A549 (cell line): ENCODE measurements at regions of chr1 and their contacts with region 1.

Region 1: DNA sequence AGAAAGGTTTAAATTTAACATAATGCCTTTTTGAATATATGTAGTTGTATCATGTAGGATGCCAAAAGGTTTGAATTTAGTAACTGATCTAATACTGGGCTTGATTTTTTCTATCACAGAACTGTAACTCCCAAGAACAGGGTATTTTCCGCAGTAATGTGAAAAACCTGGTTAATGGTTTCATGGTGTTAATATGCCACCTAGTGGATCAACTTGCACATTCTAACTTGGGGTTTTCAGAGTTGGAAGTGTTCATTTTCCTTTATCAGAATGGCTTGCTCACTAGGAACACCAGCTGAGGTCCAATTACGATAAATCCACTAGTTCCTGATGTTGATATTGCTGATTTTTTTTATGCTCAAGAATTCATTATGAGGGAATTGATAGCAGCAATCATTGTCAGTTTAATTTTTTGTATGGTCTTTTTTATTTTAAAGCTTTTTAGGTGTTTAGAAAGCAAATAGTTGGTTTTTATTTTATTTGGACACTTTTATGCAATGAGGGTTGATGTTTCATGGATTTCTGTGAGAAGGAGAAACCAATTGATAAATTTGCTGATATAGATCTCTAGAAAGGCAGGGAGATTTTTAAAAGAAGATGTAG is 157.2 kb downstream of the PLA2G4A start:
- DNase-seq: peak; percentile 33 to 62
- ATAC-seq: peak; percentile 85 to 91
- H3K4me3 ChIP-seq: no peak overlapping the region
- H3K27ac ChIP-seq: peak overlapping the region; percentile 39 to 63; a peak in 2 of 6 replicates
- H3K4me1 ChIP-seq: peaks cover 6% of the 10 kb centered on the region; the same call in 1 of the 3 replicates
- CTCF ChIP-seq: peak; percentile 93
- EP300 ChIP-seq: no peak
- POLR2A ChIP-seq: no peak
- RAD21 ChIP-seq: peak; percentile 96 to 97

Region 2: GRCh38 chr1:186375088-186375953 is 610.7 kb before region 1 on chr1 and contains the starts of genes ODR4 and TPR:
- CTCF ChIA-PET with region 1: interaction called, 11 read pairs
- POLR2A ChIA-PET with region 1: interaction called, 6 read pairs
- DNase-seq: peak; percentile 97 to 100
- ATAC-seq: peak; percentile 92 to 96
- H3K4me3 ChIP-seq: peak within 1 kb of the TSS; percentile 92
- H3K27ac ChIP-seq: peak within 1 kb of the TSS; percentile 82 to 93
- H3K4me1 ChIP-seq: peaks cover 26% of the 10 kb centered on the region; the same call in 2 of the 3 replicates
- CTCF ChIP-seq: peak; percentile 98
- EP300 ChIP-seq: no peak
- POLR2A ChIP-seq: peak; percentile 87
- RAD21 ChIP-seq: peak; percentile 49 to 74
- polyA plus RNA-seq, gene ODR4: 25.2 and 34.9 TPM in 2 replicates
- polyA plus RNA-seq, gene TPR: 93.2 and 138 TPM in 2 replicates

Region 3: GRCh38 chr1:186482661-186483255 is 503.2 kb before region 1 on chr1:
- CTCF ChIA-PET with region 1: interaction called, 10 read pairs
- POLR2A ChIA-PET with region 1: no interaction called
- DNase-seq: peak; percentile 41 to 77
- ATAC-seq: peak; percentile 83 to 90
- H3K4me3 ChIP-seq: no peak overlapping the region
- H3K27ac ChIP-seq: peak overlapping the region; percentile 17 to 38; a peak in 5 of 6 replicates
- H3K4me1 ChIP-seq: peaks cover 23% of the 10 kb centered on the region; the same call in 2 of the 3 replicates
- CTCF ChIP-seq: peak; percentile 98
- EP300 ChIP-seq: no peak
- POLR2A ChIP-seq: no peak
- RAD21 ChIP-seq: peak; percentile 99 to 100

Region 4: GRCh38 chr1:186605762-186606350 is 380.1 kb before region 1 on chr1:
- CTCF ChIA-PET with region 1: interaction called, 28 read pairs
- POLR2A ChIA-PET with region 1: no interaction called
- DNase-seq: peak in 1 of 2 experiments; percentile 73
- ATAC-seq: peak; percentile 81 to 94
- H3K4me3 ChIP-seq: no peak overlapping the region
- H3K27ac ChIP-seq: peak overlapping the region; percentile 15 to 71; a peak in 3 of 6 replicates
- H3K4me1 ChIP-seq: no peaks in the 10 kb centered on the region
- CTCF ChIP-seq: peak; percentile 75
- EP300 ChIP-seq: no peak
- POLR2A ChIP-seq: no peak
- RAD21 ChIP-seq: peak; percentile 93 to 96

Region 5: GRCh38 chr1:186806477-186806876 is 179.5 kb before region 1 on chr1:
- CTCF ChIA-PET with region 1: interaction called, 11 read pairs
- POLR2A ChIA-PET with region 1: no interaction called
- DNase-seq: peak; percentile 23 to 77
- ATAC-seq: peak; percentile 81 to 91
- H3K4me3 ChIP-seq: no peak overlapping the region
- H3K27ac ChIP-seq: peak overlapping the region in 1 of 2 experiments; percentile 35; a peak in 1 of 6 replicates
- H3K4me1 ChIP-seq: peaks cover 11% of the 10 kb centered on the region
- CTCF ChIP-seq: peak; percentile 57
- EP300 ChIP-seq: no peak
- POLR2A ChIP-seq: no peak
- RAD21 ChIP-seq: peak; percentile 82 to 83

Region 6: DNA sequence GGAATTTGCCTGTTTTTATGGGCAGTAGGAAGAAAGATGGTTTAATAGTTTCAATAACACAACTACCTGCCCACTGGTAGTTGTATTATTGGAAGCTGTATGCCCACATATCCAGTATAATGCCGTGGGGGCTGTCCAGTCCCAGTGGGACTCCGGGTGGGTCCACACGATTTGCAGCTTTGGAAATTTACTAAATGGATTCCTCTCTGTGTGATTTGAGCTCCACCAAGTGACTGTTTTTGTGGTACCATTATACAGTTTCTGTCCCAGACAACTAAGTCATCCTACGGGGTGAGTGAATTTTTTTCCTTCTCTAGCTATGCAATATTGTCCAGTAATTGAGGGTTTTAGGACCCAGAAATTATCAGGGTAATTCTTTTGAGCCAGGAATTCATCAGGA is 70.4 kb before region 1 on chr1:
- CTCF ChIA-PET with region 1: interaction called, 15 read pairs
- POLR2A ChIA-PET with region 1: no interaction called
- DNase-seq: no peak
- ATAC-seq: no peak
- H3K4me3 ChIP-seq: no peak overlapping the region
- H3K27ac ChIP-seq: peak overlapping the region in 1 of 2 experiments; percentile 41; a peak in 3 of 6 replicates
- H3K4me1 ChIP-seq: peaks cover 5% of the 10 kb centered on the region; the same call in 1 of the 3 replicates
- CTCF ChIP-seq: peak; percentile 43
- EP300 ChIP-seq: no peak
- POLR2A ChIP-seq: no peak
- RAD21 ChIP-seq: peak; percentile 53 to 72

Region 7: DNA sequence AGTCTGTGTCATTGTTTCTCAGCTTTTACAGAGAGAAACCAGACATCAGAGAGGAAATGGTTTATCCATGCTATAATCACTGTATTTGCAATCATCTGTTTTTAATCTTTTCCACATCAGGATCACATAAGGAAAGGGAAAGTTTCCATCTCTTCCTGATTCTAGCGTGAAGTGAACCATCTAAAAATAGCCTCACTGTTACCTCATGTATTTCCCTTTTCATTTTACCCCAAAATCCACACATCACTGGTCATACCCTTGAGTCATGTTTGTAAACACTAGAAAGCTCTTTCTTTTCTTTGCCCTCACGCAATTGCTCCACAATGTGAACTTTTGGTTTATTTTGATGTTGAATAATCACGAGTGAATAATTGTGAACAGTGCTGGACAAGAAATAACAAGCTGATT is 11.2 kb before region 1 on chr1:
- CTCF ChIA-PET with region 1: interaction called, 19 read pairs
- POLR2A ChIA-PET with region 1: no interaction called
- DNase-seq: peak; percentile 3 to 42
- ATAC-seq: peak; percentile 62 to 84
- H3K4me3 ChIP-seq: no peak overlapping the region
- H3K27ac ChIP-seq: no peak overlapping the region
- H3K4me1 ChIP-seq: peaks cover 11% of the 10 kb centered on the region
- CTCF ChIP-seq: no peak
- EP300 ChIP-seq: peak in 1 of 2 experiments; percentile 21; a peak in 1 of 5 replicates
- POLR2A ChIP-seq: no peak
- RAD21 ChIP-seq: no peak